Left cardiac atrium (tissue), 4 donors: ENCODE measurements at regions of chr6 and their contacts with region 1.

Region 1: DNA sequence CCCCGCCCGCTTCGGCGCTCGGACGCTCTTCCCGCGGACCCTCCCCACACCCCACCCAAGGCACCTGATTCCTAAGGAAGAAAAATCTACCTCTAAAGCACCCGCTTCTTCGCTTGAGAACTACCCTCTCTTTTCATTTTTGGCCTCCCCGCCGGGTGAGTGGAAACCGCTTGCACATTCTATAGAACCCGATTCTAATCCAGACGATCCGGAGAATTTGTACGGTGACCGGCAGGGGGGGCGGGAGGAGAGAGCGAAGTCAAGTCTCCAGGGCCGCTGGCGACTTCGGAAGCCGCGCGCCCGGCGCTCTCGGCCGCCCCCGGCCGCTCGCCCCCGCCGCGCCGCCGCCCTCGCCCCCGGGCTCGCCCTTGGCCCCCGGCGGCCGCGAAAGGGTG is at the start of gene RBM24:
- DNase-seq: peak; percentile 60
- ATAC-seq: peak; percentile 20 to 42
- total RNA-seq, gene RBM24: 121 to 132 TPM

Region 2: GRCh38 chr6:16909658-16910360 is 371.3 kb before region 1 on chr6:
- intact Hi-C with region 1: no loop called
- DNase-seq: no peak
- ATAC-seq: no peak

Region 3: GRCh38 chr6:17167327-17167979 is 113.6 kb before region 1 on chr6:
- intact Hi-C with region 1: loop called in 1 of 2 experiments (anchors 5 kb)
- DNase-seq: peak; percentile 45
- ATAC-seq: peak; percentile 82 to 90

Region 4: DNA sequence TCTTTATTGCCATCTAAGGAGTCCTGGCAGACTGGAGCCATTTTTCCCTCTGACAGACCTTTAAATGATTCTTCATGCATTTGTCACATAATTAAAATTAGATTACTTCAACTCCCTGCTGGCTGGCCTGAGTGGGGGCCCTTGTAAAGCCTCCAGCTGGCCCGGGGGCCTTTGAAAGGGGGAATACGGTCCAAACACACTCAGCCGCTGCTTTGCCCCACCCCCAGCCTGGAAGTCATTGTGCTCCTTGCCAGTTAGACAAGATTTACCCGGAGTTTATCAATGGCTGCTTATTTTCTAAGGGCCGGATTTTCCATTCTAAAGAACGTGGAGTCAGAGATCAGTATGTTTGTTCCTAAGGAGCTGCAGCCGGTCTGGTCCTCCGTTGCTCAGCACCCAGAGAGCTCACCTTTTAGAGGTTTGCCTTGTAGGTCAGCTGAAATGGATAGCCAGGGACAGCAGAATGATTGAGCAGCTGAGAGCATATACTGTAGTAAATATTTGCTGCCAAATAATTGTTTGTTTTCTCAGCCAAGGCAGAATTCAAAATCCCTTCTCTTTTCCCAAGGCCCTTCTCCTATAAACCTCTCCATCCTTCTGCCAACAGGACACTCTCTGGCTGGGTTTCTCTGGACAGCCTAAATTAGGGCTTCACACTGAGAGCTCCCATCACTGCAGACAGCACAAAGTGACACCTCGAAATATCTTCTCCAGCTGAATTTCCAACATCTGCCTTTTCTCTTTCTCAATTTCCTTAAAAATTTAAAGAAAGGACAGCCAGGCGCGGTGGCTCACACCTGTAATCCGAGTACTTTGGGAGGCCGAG is 68.3 kb before region 1 on chr6:
- intact Hi-C with region 1: loop called (anchors 5 to 10 kb)
- DNase-seq: peak; percentile 59
- ATAC-seq: peak; percentile 91 to 93

Region 5: DNA sequence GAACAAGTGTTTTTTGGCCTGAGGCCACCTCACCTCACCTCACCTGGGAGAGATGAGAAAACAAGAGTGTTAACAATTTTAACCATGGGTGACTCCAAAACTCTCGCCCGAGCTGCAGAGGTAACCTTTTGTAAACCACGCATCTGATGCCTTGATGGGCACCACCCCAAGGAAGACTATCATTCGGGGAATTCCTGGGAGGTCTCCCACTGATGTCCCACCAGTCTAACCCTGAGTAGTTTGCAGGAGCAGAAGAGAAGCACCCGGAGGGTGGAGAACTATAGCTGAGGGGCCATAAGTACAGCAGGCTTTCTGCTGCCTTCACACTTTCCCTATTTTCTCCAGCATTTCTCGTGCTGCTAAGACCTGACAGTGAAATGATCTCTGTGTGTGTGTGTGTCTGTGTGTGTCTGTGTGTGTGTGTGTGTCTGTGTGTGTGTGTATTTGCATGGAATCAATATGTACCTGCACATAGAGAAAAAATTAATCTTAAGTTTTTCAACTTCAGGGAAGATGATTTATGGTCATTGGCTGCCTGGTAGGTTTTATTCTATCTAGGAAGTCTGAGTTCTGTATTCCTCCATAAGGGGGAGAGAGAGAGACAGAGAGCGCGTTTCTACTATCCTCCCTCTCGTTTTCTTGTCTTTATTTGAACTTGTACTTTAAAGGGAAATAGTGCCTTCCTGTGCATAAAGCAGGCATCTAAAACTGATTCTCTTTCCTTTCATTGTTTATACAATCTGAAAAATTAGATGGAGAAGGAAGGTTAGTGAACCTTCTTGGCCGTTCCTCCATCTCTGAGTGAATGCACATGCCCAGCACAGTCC is 188.1 kb after region 1 on chr6:
- intact Hi-C with region 1: loop called in 1 of 2 experiments (anchors 10 kb)
- DNase-seq: no peak
- ATAC-seq: no peak

Region 6: DNA sequence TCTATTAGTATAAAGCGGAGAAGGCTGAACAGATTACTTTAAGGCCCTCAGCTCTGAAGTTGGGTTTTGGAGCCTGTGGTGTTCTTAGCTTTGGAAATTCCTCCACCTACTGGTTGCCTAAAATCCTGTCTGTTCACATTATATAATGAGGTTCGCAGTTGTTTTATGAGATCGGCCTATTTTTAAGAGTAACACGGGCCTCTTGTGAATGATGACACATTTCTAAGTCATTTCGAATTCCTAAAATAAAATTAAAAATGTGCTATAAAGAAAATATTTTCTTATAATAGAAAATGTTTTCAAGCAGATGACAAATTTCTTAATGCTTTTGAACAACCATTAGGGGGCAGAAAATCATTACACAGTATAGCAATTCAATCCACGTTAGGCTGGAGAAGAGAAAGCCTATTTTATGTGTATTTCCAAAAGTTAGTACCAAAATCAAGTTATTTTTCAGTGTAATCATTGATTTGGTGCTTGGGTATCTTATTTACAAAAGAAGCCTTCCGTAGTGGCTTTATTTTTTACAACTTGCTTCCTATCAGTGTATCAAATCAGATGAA is 303.2 kb after region 1 on chr6:
- intact Hi-C with region 1: loop called in 1 of 2 experiments (anchors 5 kb)
- DNase-seq: no peak
- ATAC-seq: peak; percentile 84 to 85